MCF 10A (cell line): ENCODE measurements at regions of chr1 and their contacts with region 1.

Region 1: GRCh38 chr1:212035123-212035834 is at the starts of genes DTL and INTS7:
- DNase-seq: peak; percentile 100
- H3K4me3 Mint-ChIP-seq: peak within 1 kb of the TSS; percentile 88
- H3K27ac Mint-ChIP-seq: peak within 1 kb of the TSS; percentile 89
- H3K4me1 Mint-ChIP-seq: peaks cover 65% of the 10 kb centered on the region
- H3K27me3 Mint-ChIP-seq: no peaks in the 10 kb centered on the region
- CTCF ChIP-seq: peak; percentile 99
- total RNA-seq, gene DTL: 20.2 and 34.4 TPM in 2 replicates
- total RNA-seq, gene INTS7: 50.0 and 62.3 TPM in 2 replicates

Region 2: GRCh38 chr1:211680752-211681327 is 354.4 kb before region 1 on chr1:
- CTCF ChIA-PET with region 1: interaction called, 242 read pairs
- POLR2A ChIA-PET with region 1: interaction called, 43 read pairs
- intact Hi-C with region 1: loop called (anchors 1 kb)
- DNase-seq: peak; percentile 92
- H3K4me3 Mint-ChIP-seq: no peak overlapping the region
- H3K27ac Mint-ChIP-seq: peak overlapping the region; percentile 24
- H3K4me1 Mint-ChIP-seq: peaks cover 8% of the 10 kb centered on the region
- H3K27me3 Mint-ChIP-seq: no peaks in the 10 kb centered on the region
- CTCF ChIP-seq: peak; percentile 99

Region 3: GRCh38 chr1:211991695-211992094 is 43.6 kb before region 1 on chr1:
- CTCF ChIA-PET with region 1: interaction called, 21 read pairs
- POLR2A ChIA-PET with region 1: interaction called, 5 read pairs
- intact Hi-C with region 1: no loop called
- DNase-seq: no peak
- H3K4me3 Mint-ChIP-seq: no peak overlapping the region
- H3K27ac Mint-ChIP-seq: no peak overlapping the region
- H3K4me1 Mint-ChIP-seq: no peaks in the 10 kb centered on the region
- H3K27me3 Mint-ChIP-seq: no peaks in the 10 kb centered on the region
- CTCF ChIP-seq: no peak

Region 4: DNA sequence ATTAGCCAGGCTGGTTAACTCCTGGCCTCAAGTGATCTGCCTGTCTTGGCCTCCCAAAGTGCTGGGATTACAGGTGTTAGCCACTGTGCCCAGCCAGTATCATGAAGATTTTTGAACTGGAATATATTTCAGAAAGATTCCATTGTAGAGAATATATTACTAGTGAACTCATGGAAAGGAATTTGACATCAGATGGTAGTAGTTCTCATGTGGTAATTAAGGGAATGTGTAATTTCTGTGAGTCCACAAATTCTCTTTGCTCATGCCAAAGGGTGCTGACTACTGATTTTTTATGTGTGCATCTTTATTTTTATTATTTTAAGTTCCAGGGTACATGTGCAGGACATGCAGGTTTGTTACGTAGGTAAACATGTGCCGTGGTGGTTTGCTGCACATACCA is 10.7 kb after region 1 on chr1:
- CTCF ChIA-PET with region 1: interaction called, 95 read pairs
- POLR2A ChIA-PET with region 1: interaction called, 385 read pairs
- intact Hi-C with region 1: no loop called
- DNase-seq: no peak
- H3K4me3 Mint-ChIP-seq: no peak overlapping the region
- H3K27ac Mint-ChIP-seq: no peak overlapping the region
- H3K4me1 Mint-ChIP-seq: peaks cover 23% of the 10 kb centered on the region
- H3K27me3 Mint-ChIP-seq: no peaks in the 10 kb centered on the region
- CTCF ChIP-seq: no peak

Region 5: GRCh38 chr1:212162635-212163034 is 127.4 kb after region 1 on chr1:
- CTCF ChIA-PET with region 1: no interaction called
- POLR2A ChIA-PET with region 1: no interaction called
- intact Hi-C with region 1: no loop called
- DNase-seq: peak; percentile 88
- H3K4me3 Mint-ChIP-seq: no peak overlapping the region
- H3K27ac Mint-ChIP-seq: no peak overlapping the region
- H3K4me1 Mint-ChIP-seq: peaks cover 13% of the 10 kb centered on the region
- H3K27me3 Mint-ChIP-seq: no peaks in the 10 kb centered on the region
- CTCF ChIP-seq: no peak

Region 6: DNA sequence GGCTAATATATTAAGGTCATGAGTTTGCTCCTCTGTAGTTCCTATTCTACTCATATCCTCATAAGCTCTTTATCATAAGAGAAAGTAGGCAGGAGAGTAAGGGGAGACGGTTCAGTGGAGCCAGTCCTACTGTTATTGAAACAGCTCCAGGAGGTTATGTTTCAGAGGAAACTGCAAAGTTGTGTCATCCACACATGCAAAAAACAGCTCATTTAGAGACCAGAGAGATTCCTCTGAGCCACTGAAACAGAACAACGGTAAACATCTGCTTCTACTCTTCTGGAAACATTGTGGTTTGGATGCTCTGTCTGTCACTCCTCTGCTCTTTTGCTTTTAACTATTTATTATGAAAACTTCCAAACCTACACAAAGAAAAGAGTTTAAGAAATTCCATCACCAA is 183.6 kb after region 1 on chr1:
- CTCF ChIA-PET with region 1: no interaction called
- POLR2A ChIA-PET with region 1: no interaction called
- intact Hi-C with region 1: no loop called
- DNase-seq: no peak
- H3K4me3 Mint-ChIP-seq: no peak overlapping the region
- H3K27ac Mint-ChIP-seq: no peak overlapping the region
- H3K4me1 Mint-ChIP-seq: no peaks in the 10 kb centered on the region
- H3K27me3 Mint-ChIP-seq: peaks cover 3% of the 10 kb centered on the region
- CTCF ChIP-seq: no peak

Region 7: GRCh38 chr1:212291505-212292134 is 256.3 kb after region 1 on chr1:
- CTCF ChIA-PET with region 1: interaction called, 42 read pairs
- POLR2A ChIA-PET with region 1: interaction called, 127 read pairs
- intact Hi-C with region 1: no loop called
- DNase-seq: peak; percentile 85
- H3K4me3 Mint-ChIP-seq: no peak overlapping the region
- H3K27ac Mint-ChIP-seq: peak overlapping the region; percentile 25
- H3K4me1 Mint-ChIP-seq: peaks cover 54% of the 10 kb centered on the region
- H3K27me3 Mint-ChIP-seq: no peaks in the 10 kb centered on the region
- CTCF ChIP-seq: peak; percentile 80

Region 8: DNA sequence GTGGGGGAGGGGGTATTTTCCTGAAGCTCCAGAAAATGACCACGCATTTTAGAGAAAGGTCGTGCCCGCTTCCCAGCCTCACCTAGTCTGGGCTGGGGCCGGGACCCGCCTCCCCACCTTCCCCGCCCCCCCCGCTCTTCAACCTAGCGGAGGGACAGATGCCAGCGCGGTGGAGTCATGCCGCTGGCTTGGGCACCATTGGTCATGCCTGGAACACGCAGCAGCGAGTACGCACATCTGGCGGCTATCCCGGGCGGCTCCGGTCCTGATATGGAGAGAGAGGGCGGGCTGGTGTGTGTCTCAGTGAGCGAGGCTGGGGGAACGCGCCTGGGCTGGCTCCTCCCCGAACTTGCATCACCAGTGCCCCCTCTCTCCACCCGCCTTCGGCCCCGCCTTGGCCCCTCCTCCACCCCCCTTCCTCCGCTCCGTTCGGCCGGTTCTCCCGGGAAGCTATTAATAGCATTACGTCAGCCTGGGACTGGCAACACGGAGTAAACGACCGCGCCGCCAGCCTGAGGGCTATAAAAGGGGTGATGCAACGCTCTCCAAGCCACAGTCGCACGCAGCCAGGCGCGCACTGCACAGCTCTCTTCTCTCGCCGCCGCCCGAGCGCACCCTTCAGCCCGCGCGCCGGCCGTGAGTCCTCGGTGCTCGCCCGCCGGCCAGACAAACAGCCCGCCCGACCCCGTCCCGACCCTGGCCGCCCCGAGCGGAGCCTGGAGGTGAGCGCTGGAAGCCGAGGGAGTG is 573.1 kb after region 1 on chr1 and contains the start of gene ATF3:
- CTCF ChIA-PET with region 1: no interaction called
- POLR2A ChIA-PET with region 1: interaction called, 5 read pairs
- intact Hi-C with region 1: loop called (anchors 10 kb)
- DNase-seq: peak; percentile 100
- H3K4me3 Mint-ChIP-seq: peak within 1 kb of the TSS; percentile 72
- H3K27ac Mint-ChIP-seq: peak within 1 kb of the TSS; percentile 98
- H3K4me1 Mint-ChIP-seq: peaks cover 37% of the 10 kb centered on the region
- H3K27me3 Mint-ChIP-seq: peaks cover 75% of the 10 kb centered on the region
- CTCF ChIP-seq: no peak
- total RNA-seq, gene ATF3: 85.3 and 114 TPM in 2 replicates